Activated CD4-positive, alpha-beta T cell treated with anti-CD3 and anti-CD28 coated beads for 36 hours (primary cell): ENCODE measurements at regions of chr14 and their contacts with region 1.

Region 1: DNA sequence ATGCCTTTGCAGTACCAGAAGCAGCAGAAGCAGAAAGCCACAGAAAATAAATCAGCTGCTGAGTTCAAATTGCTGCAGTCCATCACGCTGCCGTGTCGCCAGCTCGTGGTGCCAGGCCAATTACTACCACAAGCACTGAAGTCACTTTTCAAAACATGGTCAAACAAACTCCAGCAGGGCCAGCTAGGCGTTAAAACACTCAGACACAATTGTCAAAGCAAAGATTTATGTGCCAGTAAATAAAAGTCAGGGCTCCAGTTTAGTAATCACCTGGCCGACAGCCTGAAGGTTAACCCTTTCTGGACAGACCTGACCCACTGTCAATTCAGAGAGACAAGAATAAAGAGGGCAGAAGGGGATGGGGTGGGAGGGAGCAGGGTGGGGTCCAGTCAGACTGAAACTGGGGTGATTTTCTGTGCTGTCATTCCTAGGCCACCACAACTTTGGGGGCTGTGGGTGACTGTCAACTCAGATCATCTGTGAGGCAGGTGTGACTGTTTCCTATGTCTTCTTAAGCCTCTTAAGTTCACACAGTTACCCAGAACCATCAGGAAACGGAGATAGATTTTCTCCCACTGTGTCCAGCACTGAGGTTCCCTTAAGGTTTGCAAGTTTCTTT is 109.8 kb upstream of the FUT8 start:
- DNase-seq: peak; percentile 83
- ATAC-seq: peak; percentile 74
- H3K4me3 Mint-ChIP-seq: peak overlapping the region; percentile 37
- H3K27ac Mint-ChIP-seq: peak overlapping the region; percentile 86
- H3K4me1 Mint-ChIP-seq: peaks cover 63% of the 10 kb centered on the region
- H3K27me3 Mint-ChIP-seq: no peaks in the 10 kb centered on the region

Region 2: DNA sequence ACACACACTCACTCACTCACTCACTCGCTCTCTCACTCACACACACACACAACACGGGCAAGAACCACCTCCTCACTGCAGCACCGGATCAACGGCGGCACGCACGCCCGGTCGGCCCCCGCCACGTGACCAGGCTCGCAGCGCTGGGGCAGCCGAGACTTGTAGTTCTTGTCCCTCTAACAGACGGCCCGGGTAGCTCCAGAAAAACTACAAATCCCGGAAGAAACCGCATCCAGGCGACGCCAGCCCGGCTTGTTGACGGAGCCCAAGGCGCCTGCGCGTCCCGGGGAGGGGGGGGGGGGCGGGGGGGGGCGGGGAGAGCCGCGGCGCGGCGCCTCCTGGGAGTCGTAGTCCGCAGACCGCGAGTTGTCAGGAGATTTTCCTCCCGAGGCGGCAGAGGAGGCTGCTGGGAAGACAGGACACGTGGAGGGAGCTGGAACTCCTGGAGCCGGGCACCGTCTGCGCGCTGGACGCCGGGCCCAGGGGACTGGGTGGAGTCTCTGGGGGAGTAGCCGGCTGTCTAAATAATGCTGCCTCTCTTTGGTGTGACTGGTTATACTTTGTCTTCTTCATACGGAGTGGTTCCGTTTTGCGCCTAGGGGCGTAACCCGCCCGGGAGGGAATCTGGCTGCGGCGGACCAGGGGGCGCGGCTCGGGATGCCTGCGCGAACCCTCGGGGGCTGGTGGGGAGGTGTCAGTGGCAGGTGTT is 200.1 kb before region 1 on chr14 and contains the start of gene MAX:
- CTCF ChIA-PET with region 1: no interaction called
- POLR2A ChIA-PET with region 1: no interaction called
- intact Hi-C with region 1: loop called in 1 of 2 experiments (anchors 5 kb)
- DNase-seq: peak; percentile 99
- ATAC-seq: peak; percentile 95
- H3K4me3 Mint-ChIP-seq: peak within 1 kb of the TSS; percentile 89
- H3K27ac Mint-ChIP-seq: peak within 1 kb of the TSS; percentile 96
- H3K4me1 Mint-ChIP-seq: peaks cover 40% of the 10 kb centered on the region
- H3K27me3 Mint-ChIP-seq: peaks cover 2% of the 10 kb centered on the region
- total RNA-seq, gene MAX: 93.6 to 136 TPM

Region 3: GRCh38 chr14:65229751-65230749 is 72.6 kb before region 1 on chr14:
- CTCF ChIA-PET with region 1: no interaction called
- POLR2A ChIA-PET with region 1: no interaction called
- intact Hi-C with region 1: loop called in 1 of 2 experiments (anchors 5 kb)
- DNase-seq: peak; percentile 65
- ATAC-seq: peak; percentile 84
- H3K4me3 Mint-ChIP-seq: peak overlapping the region; percentile 71
- H3K27ac Mint-ChIP-seq: peak overlapping the region; percentile 92
- H3K4me1 Mint-ChIP-seq: peaks cover 41% of the 10 kb centered on the region
- H3K27me3 Mint-ChIP-seq: no peaks in the 10 kb centered on the region

Region 4: DNA sequence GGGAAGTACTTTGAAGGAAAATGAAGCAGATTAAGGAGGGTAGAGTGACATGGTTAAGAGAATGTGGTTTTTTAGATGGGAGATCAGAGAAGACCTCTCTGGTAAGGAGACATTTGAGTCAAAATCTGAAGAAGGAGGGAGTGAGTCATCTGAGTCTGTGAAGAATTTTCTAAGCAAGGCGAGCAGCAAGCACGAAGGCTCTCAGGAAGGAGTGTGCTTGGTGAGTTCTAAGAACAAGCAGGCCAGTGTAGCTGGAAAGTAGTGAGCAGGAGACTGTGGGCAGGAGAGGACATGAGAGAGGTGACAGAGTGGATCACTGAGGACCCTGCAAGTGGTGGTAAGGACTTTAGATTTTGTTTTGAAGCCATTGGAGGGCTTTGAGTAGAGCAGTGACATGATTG is 33.5 kb after region 1 on chr14:
- CTCF ChIA-PET with region 1: interaction called, 5 read pairs
- POLR2A ChIA-PET with region 1: interaction called, 8 read pairs
- intact Hi-C with region 1: loop called (anchors 1 kb)
- DNase-seq: peak; percentile 72
- ATAC-seq: peak; percentile 89
- H3K4me3 Mint-ChIP-seq: peak overlapping the region; percentile 74
- H3K27ac Mint-ChIP-seq: peak overlapping the region; percentile 95
- H3K4me1 Mint-ChIP-seq: peaks cover 55% of the 10 kb centered on the region
- H3K27me3 Mint-ChIP-seq: no peaks in the 10 kb centered on the region

Region 5: DNA sequence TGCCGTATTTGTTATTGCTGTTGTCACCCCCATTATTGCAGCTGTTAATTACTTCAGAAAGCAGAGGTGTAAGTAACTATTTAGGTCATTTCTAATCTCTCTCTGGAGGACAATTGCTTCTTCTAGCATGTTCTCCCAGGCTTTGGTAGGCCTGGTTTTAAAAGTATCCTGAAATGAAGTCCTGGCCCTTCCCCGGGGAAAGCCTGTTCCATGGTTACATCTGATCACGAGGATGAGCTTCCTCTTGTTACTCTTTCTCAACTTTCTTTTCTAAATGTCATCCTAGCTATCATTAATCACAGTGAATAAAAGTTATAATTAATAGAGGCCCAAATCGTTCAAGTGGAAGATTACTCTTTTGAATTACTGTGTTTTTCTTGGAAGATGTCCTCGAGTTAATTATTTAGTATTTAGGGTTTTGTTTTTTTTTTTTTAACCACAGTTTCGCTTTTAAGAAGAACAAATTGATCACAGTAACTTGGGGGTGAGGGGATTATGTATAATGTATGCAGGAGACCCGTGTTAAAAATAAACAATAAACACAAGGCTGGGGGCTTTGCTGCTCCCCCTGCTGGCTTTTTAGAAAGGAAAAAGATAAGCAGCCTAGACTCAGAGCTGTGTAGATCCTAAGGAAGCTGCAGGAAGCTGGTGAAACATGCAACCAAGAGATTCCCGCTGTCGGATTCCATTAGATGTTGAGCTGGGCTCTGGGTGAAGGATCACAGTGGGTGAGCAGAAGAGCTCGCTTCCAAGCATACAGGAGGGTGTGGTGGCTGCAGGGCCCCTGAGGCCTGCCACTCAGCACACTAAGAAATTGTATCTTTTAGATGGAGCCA is 530.0 kb after region 1 on chr14:
- CTCF ChIA-PET with region 1: no interaction called
- POLR2A ChIA-PET with region 1: no interaction called
- intact Hi-C with region 1: no loop called
- DNase-seq: no peak
- ATAC-seq: no peak
- H3K4me3 Mint-ChIP-seq: no peak overlapping the region
- H3K27ac Mint-ChIP-seq: no peak overlapping the region
- H3K4me1 Mint-ChIP-seq: peaks cover 16% of the 10 kb centered on the region
- H3K27me3 Mint-ChIP-seq: no peaks in the 10 kb centered on the region